Right cardiac atrium (tissue), 5 donors: ENCODE measurements at regions of chr11 and their contacts with region 1.

Region 1: DNA sequence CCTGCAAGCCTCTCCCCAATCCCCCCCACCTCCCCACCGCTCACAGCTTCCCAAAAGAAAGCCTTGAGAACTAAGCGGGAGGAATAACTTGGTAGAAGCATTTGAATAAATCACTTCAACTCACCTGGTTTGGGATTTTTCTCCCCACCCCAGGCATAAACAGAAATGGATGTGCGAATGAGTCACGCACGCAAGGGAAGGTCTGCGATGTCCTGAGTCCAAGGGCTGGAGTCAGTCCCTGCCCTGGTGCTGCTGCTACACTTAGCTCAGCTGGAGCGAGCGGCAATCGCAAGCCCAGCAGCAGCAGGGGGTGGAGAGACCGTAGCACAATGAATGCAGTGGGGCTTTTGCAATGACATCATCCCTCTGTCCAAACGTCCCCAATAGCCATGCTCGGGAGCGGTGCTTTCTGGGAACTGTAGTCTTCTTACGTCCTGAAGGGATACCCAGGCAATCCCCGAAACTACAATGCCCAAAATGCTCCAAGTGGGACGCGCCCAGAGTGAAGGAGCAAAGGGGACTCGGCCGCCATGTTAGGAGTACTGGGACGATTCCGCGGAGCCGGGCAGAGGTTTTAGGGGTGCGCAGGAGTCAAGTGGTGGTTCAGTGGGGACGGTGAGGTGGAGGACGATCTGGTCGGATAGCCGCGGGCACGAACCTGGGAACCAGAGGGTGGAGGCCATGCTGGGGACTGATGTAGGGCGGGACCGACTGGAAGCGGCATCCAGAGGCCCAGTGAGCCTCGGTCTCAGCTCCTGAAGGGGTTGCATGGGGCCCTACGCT is at the start of gene RAB30:
- DNase-seq: peak; percentile 96 to 97 (median 97)
- ATAC-seq: peak; percentile 98 to 99
- H3K4me3 ChIP-seq: peak within 1 kb of the TSS; percentile 77
- H3K27ac ChIP-seq: peak within 1 kb of the TSS; percentile 96
- H3K4me1 ChIP-seq: peaks cover 5% of the 10 kb centered on the region
- H3K27me3 ChIP-seq: no peaks in the 10 kb centered on the region
- total RNA-seq, gene RAB30: 22.3 to 30.6 (median 26.8) TPM

Region 2: GRCh38 chr11:82927254-82927880 is 144.4 kb before region 1 on chr11:
- intact Hi-C with region 1: loop called in 1 of 4 experiments (anchors 10 kb)
- DNase-seq: no peak
- ATAC-seq: peak in 1 of 2 donors; percentile 51
- H3K4me3 ChIP-seq: no peak overlapping the region
- H3K27ac ChIP-seq: no peak overlapping the region
- H3K4me1 ChIP-seq: peaks cover 2% of the 10 kb centered on the region
- H3K27me3 ChIP-seq: no peaks in the 10 kb centered on the region

Region 3: GRCh38 chr11:83002053-83002452 is 69.7 kb before region 1 on chr11:
- intact Hi-C with region 1: loop called in 1 of 4 experiments (anchors 5 kb)
- DNase-seq: peak in 1 of 3 donors; percentile 15
- ATAC-seq: peak; percentile 44 to 84
- H3K4me3 ChIP-seq: no peak overlapping the region
- H3K27ac ChIP-seq: no peak overlapping the region
- H3K4me1 ChIP-seq: peaks cover 4% of the 10 kb centered on the region
- H3K27me3 ChIP-seq: no peaks in the 10 kb centered on the region

Region 4: DNA sequence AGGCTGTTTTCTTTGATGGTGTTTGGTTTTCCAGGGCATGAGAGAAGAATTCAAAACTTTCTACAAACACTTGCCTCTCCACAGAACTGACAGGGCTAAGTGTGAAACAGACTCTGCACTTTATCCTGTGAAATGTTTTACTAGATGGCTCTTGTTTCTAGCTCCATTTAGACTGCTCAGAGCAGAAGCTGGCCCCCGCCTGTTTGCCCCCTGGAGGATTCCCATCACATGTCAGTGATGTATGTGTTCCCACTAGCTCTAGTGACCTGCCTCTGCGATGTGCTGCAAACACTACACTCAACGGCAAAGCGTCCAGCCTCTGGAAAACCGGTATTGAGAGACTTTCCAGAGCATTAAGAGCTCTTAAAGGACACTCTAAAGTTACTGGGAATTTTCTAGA is 43.8 kb after region 1 on chr11:
- intact Hi-C with region 1: no loop called
- DNase-seq: peak in 2 of 3 donors; percentile 56 to 66
- ATAC-seq: peak; percentile 25 to 66
- H3K4me3 ChIP-seq: no peak overlapping the region
- H3K27ac ChIP-seq: peak overlapping the region; percentile 38
- H3K4me1 ChIP-seq: peaks cover 2% of the 10 kb centered on the region
- H3K27me3 ChIP-seq: no peaks in the 10 kb centered on the region

Region 5: GRCh38 chr11:83156150-83156995 is 84.6 kb after region 1 on chr11:
- intact Hi-C with region 1: loop called in 2 of 4 experiments (anchors 5 to 10 kb)
- DNase-seq: peak; percentile 98 to 100 (median 99)
- ATAC-seq: peak; percentile 97 to 98
- H3K4me3 ChIP-seq: peak overlapping the region; percentile 86
- H3K27ac ChIP-seq: peak overlapping the region; percentile 90
- H3K4me1 ChIP-seq: no peaks in the 10 kb centered on the region
- H3K27me3 ChIP-seq: no peaks in the 10 kb centered on the region